Kidney (tissue), 22 donors: ENCODE measurements at regions of chr11 and their contacts with region 1.

Region 1: DNA sequence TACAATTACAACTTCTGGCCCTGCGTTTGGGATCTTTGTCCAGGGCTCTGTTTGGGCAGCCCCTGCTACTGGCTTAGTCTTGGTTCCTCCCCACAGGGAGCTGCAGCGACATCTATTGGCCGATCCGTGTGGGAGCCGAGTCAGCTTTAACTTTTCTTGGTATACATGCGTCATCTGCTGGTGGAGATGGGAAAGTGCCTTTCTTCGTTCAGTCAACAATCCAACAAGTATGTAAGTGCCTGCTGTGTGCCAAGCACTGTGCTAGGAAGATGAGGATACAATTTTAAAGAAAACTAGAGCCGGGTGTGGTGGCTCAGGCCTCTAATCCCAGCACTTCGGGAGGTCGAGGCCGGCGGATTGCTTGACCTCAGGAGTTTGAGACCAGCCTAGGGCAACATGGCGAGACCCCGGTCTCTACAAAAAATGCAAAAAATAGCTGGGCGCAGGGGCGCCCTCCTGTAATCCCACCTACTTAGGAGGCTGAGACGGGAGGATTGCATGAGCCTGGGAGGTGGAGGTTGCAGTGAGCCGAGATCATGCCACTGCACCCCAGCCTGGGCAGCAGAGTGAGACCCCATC is 8.2 kb downstream of the TPBGL start:
- DNase-seq: peak; percentile 91 to 97 (median 94)
- H3K4me3 ChIP-seq: peak overlapping the region in 1 of 3 donors; percentile 17
- H3K27ac ChIP-seq: no peak overlapping the region
- H3K4me1 ChIP-seq: no peaks in the 10 kb centered on the region
- H3K27me3 ChIP-seq: peaks cover 5% of the 10 kb centered on the region
- CTCF ChIP-seq: peak; percentile 99

Region 2: DNA sequence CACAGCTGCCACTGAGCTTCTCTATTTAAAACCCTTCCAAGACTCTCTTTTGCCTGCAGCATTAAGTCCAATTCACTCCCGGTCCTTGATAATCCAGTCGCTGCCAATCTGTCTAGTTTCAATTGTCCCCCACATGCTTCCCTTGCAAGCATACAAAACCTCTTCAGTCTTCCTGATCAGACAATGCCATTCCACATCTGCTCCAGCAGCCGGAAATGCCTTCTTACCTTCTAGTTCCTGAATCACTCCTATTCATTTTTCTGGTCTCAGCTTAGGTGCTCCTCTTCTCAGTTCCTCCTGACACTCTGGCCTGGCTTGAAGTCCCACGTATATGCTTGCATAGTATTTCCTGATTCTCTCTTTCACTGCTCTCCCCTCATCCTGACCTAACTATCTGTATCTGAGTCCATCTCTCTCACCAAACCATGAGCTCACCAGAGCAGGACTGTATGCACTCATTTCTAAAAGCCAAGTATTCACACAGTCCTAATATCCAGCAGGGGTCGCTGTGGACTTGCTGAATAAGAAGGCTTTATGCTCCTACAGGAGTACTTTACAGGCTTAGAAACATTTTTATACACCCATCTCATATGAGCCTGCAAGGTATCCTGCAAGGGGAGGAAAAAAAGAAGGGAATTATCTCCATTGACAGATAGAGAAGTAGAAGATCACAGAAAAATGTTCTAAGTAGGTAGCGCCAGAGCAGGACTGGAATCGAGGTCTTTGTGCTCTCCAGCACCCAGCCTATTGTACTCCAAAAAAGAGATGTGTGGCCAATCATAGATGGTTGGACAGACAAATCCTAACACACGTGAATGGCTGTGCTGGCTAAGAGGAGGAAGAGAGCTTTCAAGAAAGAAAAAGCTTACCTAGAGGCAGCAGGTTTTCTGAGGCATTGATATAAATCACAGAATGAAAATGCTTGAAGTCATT is 319.1 kb before region 1 on chr11:
- intact Hi-C with region 1: loop called (anchors 5 kb)
- DNase-seq: peak in 4 of 5 donors; percentile 50 to 96 (median 80)
- H3K4me3 ChIP-seq: no peak overlapping the region
- H3K27ac ChIP-seq: peak overlapping the region in 1 of 2 donors; percentile 32
- H3K4me1 ChIP-seq: no peaks in the 10 kb centered on the region
- H3K27me3 ChIP-seq: no peaks in the 10 kb centered on the region
- CTCF ChIP-seq: peak; percentile 87

Region 3: DNA sequence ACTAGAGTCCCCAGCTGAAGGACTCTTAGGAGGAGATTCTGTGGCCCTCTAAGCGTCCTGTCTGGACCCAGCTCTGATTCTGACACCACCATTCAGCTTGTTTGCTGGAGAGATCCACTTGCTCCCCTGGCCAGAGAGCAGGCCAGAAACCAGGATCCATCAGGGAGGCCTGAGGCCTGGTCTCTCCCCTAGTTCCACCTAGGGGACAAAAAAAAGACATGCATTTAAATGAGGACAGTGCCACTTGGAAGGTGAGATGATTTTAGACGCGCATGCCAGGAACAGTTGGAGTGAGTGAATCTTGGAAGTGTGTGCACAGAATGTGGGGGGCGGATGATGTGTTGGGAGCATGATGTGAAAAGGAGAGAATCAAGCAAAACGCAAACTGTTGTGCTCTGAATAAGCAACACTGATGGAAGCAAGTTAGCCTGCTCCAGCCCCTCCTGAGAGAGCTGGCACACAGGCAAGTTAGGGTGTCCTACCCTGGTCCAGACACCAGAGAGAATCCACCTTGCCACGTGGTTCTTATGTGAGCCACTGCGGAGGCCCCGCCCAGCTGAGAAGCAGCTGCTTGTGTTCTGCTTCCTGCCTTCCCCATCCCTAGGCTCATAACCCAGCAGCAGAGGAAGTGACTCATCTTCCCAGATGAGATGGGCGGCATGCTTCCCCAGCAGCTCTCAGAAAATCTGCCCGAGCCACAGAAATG is 105.9 kb before region 1 on chr11:
- intact Hi-C with region 1: loop called (anchors 5 kb)
- DNase-seq: peak in 2 of 5 donors; percentile 65 to 92
- H3K4me3 ChIP-seq: no peak overlapping the region
- H3K27ac ChIP-seq: no peak overlapping the region
- H3K4me1 ChIP-seq: peaks cover 0 to 4% (median 0%) of the 10 kb centered on the region in 3 donors
- H3K27me3 ChIP-seq: no peaks in the 10 kb centered on the region
- CTCF ChIP-seq: no peak

Region 4: DNA sequence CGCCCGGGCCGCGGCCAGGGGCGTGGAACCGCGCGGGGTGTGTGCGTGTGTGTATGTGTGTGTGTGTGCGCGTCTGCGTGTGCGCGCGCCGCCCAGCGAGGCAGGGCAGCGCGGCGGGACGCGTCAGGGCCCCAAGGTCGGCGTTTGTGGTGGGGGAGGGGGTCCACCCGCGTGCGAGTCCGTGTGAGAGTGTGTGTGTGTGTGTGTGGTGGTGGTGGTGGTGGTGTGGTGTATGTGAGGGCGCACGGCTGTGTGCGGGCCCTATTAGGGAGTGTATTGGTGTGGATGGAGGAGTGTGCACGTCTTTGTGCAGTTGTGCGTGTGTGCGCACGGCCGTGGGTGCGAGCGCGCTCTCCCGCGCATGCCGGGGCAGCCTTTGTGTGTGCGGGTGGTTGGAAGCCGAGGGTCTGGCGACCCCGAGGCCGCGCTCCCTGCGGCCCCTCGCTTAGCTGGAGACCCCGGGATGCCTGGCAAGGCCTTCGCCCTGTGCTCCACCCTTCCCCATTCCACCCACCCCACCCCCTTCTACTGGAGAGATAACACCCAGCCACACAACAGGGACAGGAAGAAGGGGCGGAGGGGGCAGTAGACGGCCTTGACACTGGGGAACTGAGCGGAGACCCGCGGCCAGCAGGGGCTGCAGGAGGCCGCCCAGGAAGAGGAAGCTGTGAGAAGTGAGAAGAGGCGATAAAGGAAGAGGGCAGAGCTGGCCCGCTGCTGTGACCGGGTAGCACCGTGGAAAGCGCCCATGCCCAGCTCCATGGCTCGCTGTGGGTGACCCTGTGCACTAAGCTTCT is 103.2 kb after region 1 on chr11:
- intact Hi-C with region 1: no loop called
- DNase-seq: peak in 4 of 5 donors; percentile 63 to 85 (median 76)
- H3K4me3 ChIP-seq: peak overlapping the region; percentile 44 to 70 (median 67)
- H3K27ac ChIP-seq: peak overlapping the region; percentile 73
- H3K4me1 ChIP-seq: peaks cover 7 to 44% (median 13%) of the 10 kb centered on the region in 3 donors
- H3K27me3 ChIP-seq: no peaks in the 10 kb centered on the region
- CTCF ChIP-seq: no peak

Region 5: DNA sequence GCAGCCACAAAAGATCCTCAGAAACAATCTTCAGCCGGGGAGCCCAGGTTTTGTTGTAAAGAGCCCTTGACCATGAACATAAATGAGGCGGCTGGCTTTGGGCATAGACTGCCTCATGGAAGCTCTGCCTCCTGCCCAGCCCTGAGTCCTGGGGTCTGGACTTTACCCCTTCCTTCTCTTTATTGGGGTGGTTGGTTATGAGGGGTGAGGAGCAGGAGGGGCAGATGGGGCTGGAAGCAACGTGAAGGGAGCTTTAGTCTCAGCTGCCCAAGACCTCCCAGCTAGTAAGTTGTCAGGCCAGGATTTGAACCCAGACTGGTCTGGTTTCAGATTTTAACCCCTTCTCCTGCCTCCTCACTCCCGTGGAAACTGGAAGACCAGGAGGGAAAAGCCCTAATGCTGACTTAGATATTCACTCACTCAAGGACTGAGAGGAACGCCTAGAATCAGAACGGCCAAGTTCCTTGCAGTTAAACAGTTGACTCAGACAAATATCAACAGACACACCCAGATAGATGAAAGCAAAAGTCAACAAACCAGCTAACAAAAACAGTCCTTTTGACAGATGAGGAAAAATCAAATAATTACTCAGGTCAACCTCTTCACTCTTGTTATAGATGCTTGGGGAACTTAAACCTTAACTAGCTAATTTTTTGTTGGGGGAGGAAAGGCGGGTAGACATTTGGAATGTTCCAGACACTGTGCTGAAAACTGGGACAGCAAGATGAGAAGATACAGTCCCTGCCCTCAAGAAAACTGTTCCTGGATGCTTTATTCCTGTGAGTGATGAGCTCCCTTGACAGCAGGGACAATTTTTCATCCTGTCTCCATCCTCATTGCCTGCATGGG is 123.4 kb after region 1 on chr11:
- intact Hi-C with region 1: no loop called
- DNase-seq: peak in 1 of 5 donors; percentile 13
- H3K4me3 ChIP-seq: no peak overlapping the region
- H3K27ac ChIP-seq: no peak overlapping the region
- H3K4me1 ChIP-seq: no peaks in the 10 kb centered on the region
- H3K27me3 ChIP-seq: no peaks in the 10 kb centered on the region
- CTCF ChIP-seq: no peak

Region 6: DNA sequence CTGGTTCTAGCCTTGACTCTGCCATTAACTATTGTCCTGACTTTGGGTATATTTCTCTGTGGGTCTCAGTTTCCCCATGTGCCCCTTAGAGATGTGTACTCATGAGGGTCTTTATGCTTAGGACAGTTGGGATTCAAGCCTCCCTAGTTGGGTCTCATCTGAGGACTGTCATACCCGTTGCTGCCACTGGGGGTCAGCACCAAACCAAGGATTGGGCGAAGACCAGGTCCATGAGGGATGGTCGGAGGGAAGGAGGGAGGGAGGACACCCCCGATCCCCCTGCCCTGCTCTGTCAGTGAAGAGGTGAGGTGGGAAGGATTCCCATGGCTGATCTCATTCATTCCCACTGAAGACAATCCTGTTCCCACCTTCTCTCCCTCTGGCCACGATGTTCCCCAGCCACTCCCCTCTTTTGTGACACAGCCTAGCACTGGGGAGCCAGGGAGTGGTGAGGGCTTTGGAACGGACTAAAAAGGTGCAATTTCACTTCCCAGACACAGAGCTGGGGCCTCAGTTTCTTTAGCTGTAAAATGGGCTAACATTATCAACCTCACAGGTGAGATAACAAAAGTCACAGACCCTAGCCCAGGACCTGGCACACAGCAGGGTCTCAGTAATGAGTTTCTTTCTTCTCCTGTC is 196.7 kb after region 1 on chr11:
- intact Hi-C with region 1: no loop called
- DNase-seq: peak in 4 of 5 donors; percentile 74 to 81 (median 78)
- H3K4me3 ChIP-seq: no peak overlapping the region
- H3K27ac ChIP-seq: no peak overlapping the region
- H3K4me1 ChIP-seq: no peaks in the 10 kb centered on the region
- H3K27me3 ChIP-seq: peaks cover 2% of the 10 kb centered on the region
- CTCF ChIP-seq: peak; percentile 97

Region 7: GRCh38 chr11:75706260-75706729 is 457.5 kb after region 1 on chr11:
- intact Hi-C with region 1: no loop called
- DNase-seq: peak in 4 of 5 donors; percentile 64 to 82 (median 72)
- H3K4me3 ChIP-seq: no peak overlapping the region
- H3K27ac ChIP-seq: no peak overlapping the region
- H3K4me1 ChIP-seq: no peaks in the 10 kb centered on the region
- H3K27me3 ChIP-seq: no peaks in the 10 kb centered on the region
- CTCF ChIP-seq: peak; percentile 90